ENCODE measurements at regions of chr9 and their contacts with region 1.

Region 1: GRCh38 chr9:114906908-114907571 is 23.4 kb downstream of the TNFSF8 start:
- DNase-seq: no peak
- ATAC-seq: peak; percentile 76
- H3K4me3 ChIP-seq: no peak overlapping the region
- H3K27ac ChIP-seq: no peak overlapping the region
- H3K4me1 ChIP-seq: peaks cover 13% of the 10 kb centered on the region
- H3K27me3 ChIP-seq: no peaks in the 10 kb centered on the region
- CTCF ChIP-seq: peak; percentile 34 to 50 (median 39); a peak in 4 of 6 replicates
- EP300 ChIP-seq: no peak
- POLR2A ChIP-seq: no peak
- RAD21 ChIP-seq: peak; percentile 67

Region 2: GRCh38 chr9:114738581-114739316 is 168.3 kb before region 1 on chr9:
- CTCF ChIA-PET with region 1: interaction called, 33 read pairs
- POLR2A ChIA-PET with region 1: no interaction called
- RAD21 ChIA-PET with region 1: interaction called, 8 read pairs
- SMC1A ChIA-PET with region 1: interaction called, 12 read pairs
- in situ Hi-C with region 1: no loop called
- intact Hi-C with region 1: loop called (anchors 1 kb)
- DNase-seq: peak; percentile 24
- ATAC-seq: peak; percentile 95
- H3K4me3 ChIP-seq: no peak overlapping the region
- H3K27ac ChIP-seq: no peak overlapping the region
- H3K4me1 ChIP-seq: no peaks in the 10 kb centered on the region
- H3K27me3 ChIP-seq: peaks cover 1 to 3% of the 10 kb centered on the region in 2 experiments; a peak in 2 of 4 replicates
- CTCF ChIP-seq: peak; percentile 76 to 88 (median 82)
- EP300 ChIP-seq: no peak
- POLR2A ChIP-seq: no peak
- RAD21 ChIP-seq: peak; percentile 98

Region 3: DNA sequence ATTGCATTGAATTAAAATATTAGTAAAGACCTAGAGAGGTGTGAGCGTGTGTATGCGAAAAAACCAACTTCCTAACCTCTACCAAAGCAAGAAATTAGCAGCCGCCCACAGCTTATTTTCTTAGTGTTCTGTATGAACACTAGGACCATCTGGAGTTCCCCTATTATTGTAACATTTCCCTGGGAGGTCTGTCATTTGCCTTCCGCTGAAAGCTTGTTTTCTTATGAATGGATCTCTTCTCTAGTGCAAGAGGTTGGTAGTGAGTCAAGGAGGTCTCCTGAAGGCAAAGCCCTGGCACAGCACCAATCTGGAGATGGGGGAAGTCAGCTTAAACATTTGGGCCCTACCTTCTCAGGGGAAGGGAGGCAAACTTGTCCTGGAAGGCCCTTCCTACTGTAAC is 12.6 kb after region 1 on chr9:
- CTCF ChIA-PET with region 1: interaction called, 14 read pairs
- POLR2A ChIA-PET with region 1: no interaction called
- RAD21 ChIA-PET with region 1: interaction called, 3 read pairs
- SMC1A ChIA-PET with region 1: interaction called, 8 read pairs
- in situ Hi-C with region 1: no loop called
- intact Hi-C with region 1: no loop called
- DNase-seq: no peak
- ATAC-seq: peak; percentile 68
- H3K4me3 ChIP-seq: no peak overlapping the region
- H3K27ac ChIP-seq: no peak overlapping the region
- H3K4me1 ChIP-seq: no peaks in the 10 kb centered on the region
- H3K27me3 ChIP-seq: peaks cover 2 to 4% of the 10 kb centered on the region in 2 experiments; a peak in 2 of 4 replicates
- CTCF ChIP-seq: no peak
- EP300 ChIP-seq: no peak
- POLR2A ChIP-seq: no peak
- RAD21 ChIP-seq: no peak

Region 4: DNA sequence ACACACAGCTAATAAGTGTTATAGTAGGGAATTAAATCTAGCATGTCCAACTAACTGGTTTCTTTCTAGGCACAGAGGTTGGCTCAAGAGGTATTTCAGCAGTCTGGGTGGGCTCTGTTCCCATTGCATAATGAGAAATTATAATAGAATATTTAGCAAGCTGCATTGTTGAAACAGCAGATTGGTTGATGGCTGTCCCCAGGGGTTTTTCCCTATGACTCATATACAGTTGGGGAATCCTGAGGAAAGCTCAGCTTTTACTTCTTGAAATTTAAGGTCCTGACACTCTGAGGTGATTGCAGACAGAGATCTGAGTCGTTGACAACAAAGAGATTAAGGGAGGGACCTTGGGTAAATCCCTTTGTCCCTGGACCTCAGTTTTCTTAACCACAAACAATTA is 61.6 kb after region 1 on chr9:
- CTCF ChIA-PET with region 1: no interaction called
- POLR2A ChIA-PET with region 1: no interaction called
- RAD21 ChIA-PET with region 1: no interaction called
- SMC1A ChIA-PET with region 1: no interaction called
- in situ Hi-C with region 1: no loop called
- intact Hi-C with region 1: no loop called
- DNase-seq: no peak
- ATAC-seq: peak; percentile 85
- H3K4me3 ChIP-seq: no peak overlapping the region
- H3K27ac ChIP-seq: no peak overlapping the region
- H3K4me1 ChIP-seq: no peaks in the 10 kb centered on the region
- H3K27me3 ChIP-seq: no peaks in the 10 kb centered on the region; a peak in 1 of 4 replicates
- CTCF ChIP-seq: no peak
- EP300 ChIP-seq: no peak
- POLR2A ChIP-seq: no peak
- RAD21 ChIP-seq: no peak

Region 5: GRCh38 chr9:115099901-115100300 is 192.9 kb after region 1 on chr9:
- CTCF ChIA-PET with region 1: no interaction called
- POLR2A ChIA-PET with region 1: no interaction called
- RAD21 ChIA-PET with region 1: no interaction called
- SMC1A ChIA-PET with region 1: no interaction called
- in situ Hi-C with region 1: no loop called
- intact Hi-C with region 1: no loop called
- DNase-seq: no peak
- ATAC-seq: no peak
- H3K4me3 ChIP-seq: no peak overlapping the region
- H3K27ac ChIP-seq: no peak overlapping the region
- H3K4me1 ChIP-seq: no peaks in the 10 kb centered on the region
- H3K27me3 ChIP-seq: no peaks in the 10 kb centered on the region
- CTCF ChIP-seq: no peak
- EP300 ChIP-seq: no peak
- POLR2A ChIP-seq: no peak
- RAD21 ChIP-seq: no peak